Transverse colon (tissue), 4 donors: ENCODE measurements at regions of chr6 and their contacts with region 1.

Region 1: DNA sequence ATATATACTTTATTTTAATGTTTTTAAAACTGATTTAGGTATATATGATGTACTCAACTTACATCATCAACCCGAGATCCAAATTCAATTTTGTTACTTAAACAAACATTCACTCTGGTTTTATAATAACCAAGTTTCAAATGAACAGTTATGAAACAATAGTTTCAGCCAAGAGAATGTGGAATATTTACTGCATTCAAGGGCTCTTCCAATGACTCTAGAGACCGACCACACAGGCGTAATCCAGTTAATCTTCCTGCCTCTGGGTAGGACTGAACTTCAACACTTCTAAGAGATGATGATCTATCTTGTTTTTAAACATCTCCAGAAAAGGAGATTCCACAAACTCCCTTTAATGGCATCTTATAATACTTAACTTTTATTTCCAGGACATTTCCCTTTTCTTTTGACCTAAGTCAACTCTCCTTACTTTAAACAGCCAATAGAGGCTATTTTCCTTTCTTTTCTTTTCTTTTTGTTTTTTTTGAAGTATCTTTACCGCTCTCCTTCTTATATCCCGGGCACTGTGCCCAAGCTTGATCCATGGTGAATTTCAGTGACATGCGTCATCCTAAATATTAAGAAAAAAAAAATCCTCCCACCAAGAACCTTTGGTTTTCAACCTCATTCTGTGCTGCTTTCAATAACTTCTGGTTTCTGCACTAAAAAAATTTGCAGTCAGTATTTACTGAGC is 110.1 kb downstream of the KIF13A start:
- DNase-seq: no peak
- H3K4me3 ChIP-seq: no peak overlapping the region
- H3K27ac ChIP-seq: peak overlapping the region; percentile 10 to 34 (median 24)
- H3K4me1 ChIP-seq: peaks cover 0 to 7% (median 0%) of the 10 kb centered on the region in 4 donors
- H3K27me3 ChIP-seq: no peaks in the 10 kb centered on the region
- CTCF ChIP-seq: no peak
- EP300 ChIP-seq: no peak
- POLR2A ChIP-seq: no peak

Region 2: DNA sequence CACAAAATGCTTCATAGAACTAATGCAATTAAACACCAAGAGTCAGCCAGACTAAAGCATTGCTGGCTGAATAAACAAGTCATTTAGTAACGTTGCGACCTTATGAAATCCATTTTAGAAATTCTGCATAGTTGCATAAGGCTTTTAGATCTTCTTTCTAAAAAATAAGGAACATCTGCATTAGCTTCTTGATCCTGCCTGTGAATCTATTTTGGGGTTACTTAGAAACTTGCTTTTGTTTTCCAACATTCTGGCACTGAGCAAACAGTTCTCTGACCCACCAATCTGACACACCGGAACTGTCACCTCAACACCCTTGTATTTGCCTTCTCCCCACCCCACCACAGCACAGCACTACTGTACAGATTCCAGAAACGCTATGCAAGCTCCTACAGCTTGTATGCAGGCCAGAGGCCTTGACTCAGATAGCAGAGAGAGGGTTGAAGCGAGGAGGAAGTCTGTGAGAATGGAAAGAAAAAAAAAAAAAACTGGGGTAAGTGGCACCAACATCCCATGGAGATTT is 55.0 kb after region 1 on chr6:
- in situ Hi-C with region 1: no loop called
- intact Hi-C with region 1: loop called (anchors 10 kb)
- DNase-seq: no peak
- H3K4me3 ChIP-seq: no peak overlapping the region
- H3K27ac ChIP-seq: peak overlapping the region; percentile 44 to 71 (median 52)
- H3K4me1 ChIP-seq: peaks cover 0 to 76% (median 32%) of the 10 kb centered on the region in 4 donors
- H3K27me3 ChIP-seq: no peaks in the 10 kb centered on the region
- CTCF ChIP-seq: no peak
- EP300 ChIP-seq: no peak
- POLR2A ChIP-seq: no peak